AG04449 (cell line): ENCODE measurements at regions of chr10 and their contacts with region 1.

Region 1: DNA sequence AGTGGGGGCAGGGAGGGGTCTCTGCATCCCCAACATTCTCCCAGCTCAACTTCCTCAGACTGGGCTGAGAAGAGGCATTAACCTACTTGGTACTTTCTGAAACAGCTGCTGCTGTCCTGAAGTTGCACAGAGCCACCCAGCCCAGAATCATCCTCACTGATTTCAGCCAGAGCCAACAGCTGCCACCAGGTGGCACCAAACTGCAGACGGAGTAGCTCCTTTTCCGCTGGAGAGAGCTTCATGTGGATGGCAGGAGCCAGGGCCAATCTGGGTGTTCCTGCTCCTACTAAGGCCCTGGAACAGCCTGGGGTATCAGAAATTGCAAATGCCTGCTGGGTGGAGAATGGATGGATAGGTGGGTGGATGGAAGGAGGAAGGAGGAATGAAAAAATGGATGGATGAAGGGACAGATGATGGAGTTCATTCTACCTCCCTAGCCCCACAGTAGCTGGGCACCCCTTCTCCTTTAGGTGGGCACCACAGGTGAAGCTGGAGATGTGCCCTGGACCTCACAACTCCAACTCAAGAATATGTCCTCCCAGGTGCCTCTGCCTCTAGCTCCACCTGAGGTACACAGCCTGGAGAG is 11.8 kb upstream of the DRGX start:
- DNase-seq: peak; percentile 5
- H3K4me3 ChIP-seq: no peak overlapping the region
- CTCF ChIP-seq: peak; percentile 96

Region 2: DNA sequence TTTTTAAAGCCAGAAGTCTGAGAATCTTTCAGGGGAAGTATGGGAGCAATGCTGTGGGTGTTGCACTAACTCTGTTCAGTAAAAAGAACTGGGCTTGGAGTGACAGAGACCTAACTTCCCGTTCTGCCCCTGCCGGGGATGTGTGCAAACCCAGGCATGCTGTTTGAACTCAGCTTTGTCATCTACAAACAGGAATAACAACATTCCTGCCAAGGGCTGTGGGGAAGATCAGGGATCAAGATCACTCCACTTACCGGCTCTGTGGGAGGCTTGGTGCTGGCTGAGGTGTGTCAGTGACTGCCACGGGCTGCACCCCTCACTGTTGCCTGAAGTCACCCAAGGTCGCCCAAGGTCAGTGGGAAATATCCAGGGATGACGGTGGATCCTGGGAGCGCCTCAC is 11.4 kb after region 1 on chr10:
- CTCF ChIA-PET with region 1: interaction called, 13 read pairs
- POLR2A ChIA-PET with region 1: no interaction called
- DNase-seq: no peak
- H3K4me3 ChIP-seq: no peak overlapping the region
- CTCF ChIP-seq: no peak

Region 3: GRCh38 chr10:49488056-49488717 is 80.5 kb after region 1 on chr10:
- CTCF ChIA-PET with region 1: interaction called, 12 read pairs
- POLR2A ChIA-PET with region 1: no interaction called
- DNase-seq: no peak
- H3K4me3 ChIP-seq: no peak overlapping the region
- CTCF ChIP-seq: no peak

Region 4: DNA sequence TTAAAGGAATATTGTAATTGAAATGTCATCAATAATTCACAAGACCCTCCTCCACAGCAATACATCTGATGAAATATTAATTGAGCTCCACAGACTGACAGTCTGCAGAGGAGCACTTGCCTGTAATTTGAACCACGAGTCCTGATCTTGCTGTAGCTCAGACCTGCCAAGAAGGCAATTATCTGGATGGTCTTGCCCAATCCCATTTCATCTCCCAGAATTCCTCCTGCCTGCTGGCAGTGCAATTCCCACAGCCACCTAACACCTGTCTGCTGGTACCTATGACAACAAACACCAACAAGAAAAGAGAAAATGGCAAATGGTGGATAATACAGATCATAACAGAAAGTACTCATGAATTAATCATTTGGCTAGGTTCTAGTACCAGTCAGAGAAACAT is 92.8 kb after region 1 on chr10:
- CTCF ChIA-PET with region 1: interaction called, 31 read pairs
- POLR2A ChIA-PET with region 1: no interaction called
- DNase-seq: no peak
- H3K4me3 ChIP-seq: no peak overlapping the region
- CTCF ChIP-seq: no peak

Region 5: GRCh38 chr10:49512121-49512809 is 104.6 kb after region 1 on chr10:
- CTCF ChIA-PET with region 1: interaction called, 315 read pairs
- POLR2A ChIA-PET with region 1: no interaction called
- DNase-seq: no peak
- H3K4me3 ChIP-seq: no peak overlapping the region
- CTCF ChIP-seq: peak; percentile 55

Region 6: GRCh38 chr10:49518982-49519578 is 111.4 kb after region 1 on chr10:
- CTCF ChIA-PET with region 1: interaction called, 315 read pairs
- POLR2A ChIA-PET with region 1: interaction called, 4 read pairs
- DNase-seq: no peak
- H3K4me3 ChIP-seq: no peak overlapping the region
- CTCF ChIP-seq: peak; percentile 54

Region 7: DNA sequence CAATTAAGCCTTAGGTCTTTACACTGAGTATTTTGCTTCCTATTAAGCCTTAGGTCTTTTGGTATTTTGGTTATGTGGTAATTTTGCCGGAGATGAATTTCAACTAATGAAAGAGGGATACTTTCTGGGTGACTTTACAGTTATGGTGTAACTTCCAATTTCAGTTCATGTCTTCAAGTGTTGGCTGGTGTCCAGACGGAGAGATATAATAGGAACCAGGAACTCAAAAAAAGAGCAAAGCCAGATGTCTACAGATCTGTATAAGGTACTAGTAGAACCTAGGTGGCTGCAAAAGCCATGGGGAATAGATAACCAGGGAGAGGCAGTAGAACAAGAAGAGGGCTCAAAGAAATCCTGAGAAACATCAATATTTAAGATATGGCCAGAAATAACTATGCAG is 119.0 kb after region 1 on chr10:
- CTCF ChIA-PET with region 1: interaction called, 56 read pairs
- POLR2A ChIA-PET with region 1: no interaction called
- DNase-seq: no peak
- H3K4me3 ChIP-seq: no peak overlapping the region
- CTCF ChIP-seq: no peak